ENCODE measurements at regions of chr4 and their contacts with region 1.

Region 1: GRCh38 chr4:75989846-75990528 is 758 bp downstream of the SDAD1 start:
- DNase-seq: no peak
- ATAC-seq: peak in 3 of 4 donors; percentile 19 to 35 (median 24)
- H3K4me3 ChIP-seq: peak overlapping the region; percentile 67 to 97 (median 86)
- H3K27ac ChIP-seq: peak overlapping the region in 9 of 12 donors; percentile 60 to 83 (median 77)
- H3K4me1 ChIP-seq: peaks cover 0 to 29% (median 18%) of the 10 kb centered on the region in 12 donors
- H3K27me3 ChIP-seq: no peaks in the 10 kb centered on the region
- CTCF ChIP-seq: no peak
- POLR2A ChIP-seq: no peak

Region 2: DNA sequence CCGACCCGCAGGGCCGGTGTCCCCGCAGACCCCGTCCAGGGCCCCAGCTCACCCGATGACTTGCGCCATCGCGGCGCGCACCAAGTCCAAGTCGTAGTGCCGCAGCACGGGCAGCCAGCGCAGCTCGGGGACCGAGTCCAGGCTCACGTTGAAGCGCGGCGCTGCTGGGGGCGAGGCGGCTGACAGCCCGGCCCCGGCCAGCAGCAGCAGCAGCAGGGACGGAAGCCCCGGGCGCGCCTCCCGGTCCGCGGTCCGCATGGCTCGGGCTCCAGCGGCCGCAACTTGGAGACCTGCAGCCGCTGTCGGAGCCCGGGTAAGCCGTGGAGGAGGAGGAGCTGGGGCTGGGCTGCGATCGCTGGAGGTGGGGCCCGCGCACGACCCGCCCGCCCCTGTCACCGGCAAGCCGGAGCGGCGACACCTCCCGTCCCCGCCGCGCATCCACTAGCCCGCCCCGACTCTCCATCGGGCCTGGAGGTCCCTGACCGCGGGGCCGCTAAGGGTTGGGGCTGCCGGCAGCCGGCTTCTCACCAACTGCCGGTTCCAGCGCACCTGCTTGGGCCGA is 49.2 kb before region 1 on chr4 and contains the start of gene NAAA:
- intact Hi-C with region 1: loop called in 1 of 10 experiments (anchors 5 kb)
- DNase-seq: peak; percentile 74 to 92 (median 81)
- ATAC-seq: peak; percentile 77 to 97 (median 90)
- H3K4me3 ChIP-seq: peak within 1 kb of the TSS; percentile 64 to 94 (median 81)
- H3K27ac ChIP-seq: peak within 1 kb of the TSS in 11 of 12 donors; percentile 58 to 92 (median 80)
- H3K4me1 ChIP-seq: peaks cover 0 to 31% (median 4%) of the 10 kb centered on the region in 12 donors
- H3K27me3 ChIP-seq: no peaks in the 10 kb centered on the region
- CTCF ChIP-seq: peak in 6 of 12 donors; percentile 28 to 64 (median 46)
- POLR2A ChIP-seq: peak in 1 of 2 donors; percentile 56
- total RNA-seq, gene NAAA: 6.1 to 67.0 (median 21.3) TPM

Region 3: GRCh38 chr4:75976177-75976576 is 13.8 kb before region 1 on chr4:
- intact Hi-C with region 1: no loop called
- DNase-seq: no peak
- ATAC-seq: no peak
- H3K4me3 ChIP-seq: no peak overlapping the region
- H3K27ac ChIP-seq: no peak overlapping the region
- H3K4me1 ChIP-seq: no peaks in the 10 kb centered on the region
- H3K27me3 ChIP-seq: no peaks in the 10 kb centered on the region
- CTCF ChIP-seq: no peak
- POLR2A ChIP-seq: no peak

Region 4: DNA sequence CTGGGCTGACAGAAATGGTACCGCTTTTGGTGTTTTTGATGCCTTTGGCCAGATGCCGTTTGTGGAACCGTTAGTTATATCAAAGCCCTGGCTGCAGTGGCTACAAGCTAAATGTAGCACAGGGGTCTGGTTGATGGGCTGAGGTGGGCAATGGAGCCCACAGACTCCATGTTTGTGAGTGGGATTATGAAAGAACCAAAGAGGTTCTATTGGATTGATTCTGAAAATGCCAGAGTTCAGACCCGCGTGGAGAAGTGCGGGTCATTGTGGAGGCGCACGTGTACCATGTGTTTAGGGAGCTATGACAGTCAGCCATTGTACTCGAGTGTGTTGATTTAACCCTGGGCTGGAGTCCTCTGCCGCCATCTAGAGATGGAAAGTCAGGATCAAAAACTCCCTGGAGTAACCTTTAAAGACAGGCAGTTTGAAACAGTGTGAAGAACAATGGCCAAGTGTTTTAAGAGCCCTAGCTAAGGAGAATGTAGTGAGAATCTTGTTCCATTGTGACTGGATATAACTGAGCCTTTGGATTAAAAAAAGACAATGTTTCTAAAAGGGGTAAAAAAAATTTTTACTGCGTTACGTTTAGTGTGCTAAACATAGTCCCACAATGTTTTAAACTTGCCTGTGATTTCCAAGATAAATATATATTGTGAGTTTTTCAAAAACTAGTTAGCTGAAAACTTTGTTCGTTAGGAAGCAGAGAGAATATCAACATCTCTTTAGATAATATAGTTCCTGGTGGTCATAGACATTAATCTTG is 97.2 kb after region 1 on chr4:
- intact Hi-C with region 1: loop called in 5 of 10 experiments (anchors 1 to 5 kb)
- DNase-seq: peak in 4 of 5 donors; percentile 33 to 53 (median 40)
- ATAC-seq: peak; percentile 54 to 88 (median 88)
- H3K4me3 ChIP-seq: peak overlapping the region in 6 of 12 donors; percentile 15 to 40 (median 30)
- H3K27ac ChIP-seq: peak overlapping the region in 2 of 12 donors; percentile 19 to 44
- H3K4me1 ChIP-seq: peaks cover 0 to 38% (median 19%) of the 10 kb centered on the region in 12 donors
- H3K27me3 ChIP-seq: no peaks in the 10 kb centered on the region
- CTCF ChIP-seq: peak; percentile 13 to 69 (median 56)
- POLR2A ChIP-seq: no peak

Region 5: GRCh38 chr4:76148142-76148865 is 158.3 kb after region 1 on chr4 and contains the start of gene NUP54:
- intact Hi-C with region 1: loop called in 5 of 10 experiments (anchors 1 to 10 kb)
- DNase-seq: peak; percentile 93 to 96 (median 95)
- ATAC-seq: peak; percentile 99 to 100 (median 99)
- H3K4me3 ChIP-seq: peak within 1 kb of the TSS; percentile 65 to 97 (median 93)
- H3K27ac ChIP-seq: peak within 1 kb of the TSS; percentile 40 to 94 (median 88)
- H3K4me1 ChIP-seq: peaks cover 6 to 30% (median 25%) of the 10 kb centered on the region in 12 donors
- H3K27me3 ChIP-seq: no peaks in the 10 kb centered on the region
- CTCF ChIP-seq: no peak
- POLR2A ChIP-seq: peak in 1 of 2 donors; percentile 70
- total RNA-seq, gene NUP54: 14.2 to 26.7 (median 18.1) TPM